Sigmoid colon (tissue), 7 donors: ENCODE measurements at regions of chr3 and their contacts with region 1.

Region 1: GRCh38 chr3:10224784-10225665 is 23.2 kb upstream of the TATDN2 start:
- DNase-seq: peak; percentile 82
- H3K4me3 ChIP-seq: no peak overlapping the region
- H3K27ac ChIP-seq: no peak overlapping the region
- H3K4me1 ChIP-seq: peaks cover 0 to 7% (median 6%) of the 10 kb centered on the region in 4 donors
- H3K27me3 ChIP-seq: no peaks in the 10 kb centered on the region
- CTCF ChIP-seq: peak; percentile 77 to 86 (median 84)
- EP300 ChIP-seq: no peak
- POLR2A ChIP-seq: no peak

Region 2: DNA sequence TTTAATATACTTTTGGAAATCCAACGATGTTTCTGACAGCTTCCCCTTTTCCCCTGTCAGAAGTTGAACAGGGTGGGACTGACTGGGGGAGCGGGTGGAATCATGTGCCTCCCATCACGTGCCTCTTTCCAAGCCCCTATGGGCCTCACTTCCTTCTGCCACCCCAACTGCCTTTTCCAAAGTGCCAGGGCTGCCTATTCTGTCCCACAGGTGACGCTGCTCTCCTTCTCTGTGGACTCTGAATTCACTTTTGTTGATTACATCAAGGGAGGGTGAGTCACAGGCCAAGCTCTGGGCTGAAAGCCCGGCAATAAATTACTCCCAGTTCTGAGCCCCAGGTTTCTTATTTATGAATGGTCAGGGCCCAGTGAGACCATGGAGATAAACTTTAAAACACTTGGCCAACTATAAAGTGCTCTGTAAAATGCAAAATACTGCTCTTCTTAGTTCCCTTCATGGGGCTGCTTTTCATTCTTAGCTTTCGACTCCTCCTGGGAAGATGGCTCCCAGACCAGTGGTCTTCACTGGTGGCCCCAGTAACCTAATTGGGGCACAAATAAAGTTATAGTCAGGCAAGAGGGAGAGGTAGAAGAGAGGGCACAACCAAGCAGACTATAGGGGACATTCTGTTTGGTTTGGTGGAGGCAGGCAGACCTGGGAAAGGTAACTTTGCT is 509.1 kb before region 1 on chr3:
- intact Hi-C with region 1: loop called (anchors 10 kb)
- DNase-seq: peak; percentile 94
- H3K4me3 ChIP-seq: no peak overlapping the region
- H3K27ac ChIP-seq: peak overlapping the region; percentile 68 to 80 (median 72)
- H3K4me1 ChIP-seq: peaks cover 0 to 19% (median 10%) of the 10 kb centered on the region in 4 donors
- H3K27me3 ChIP-seq: no peaks in the 10 kb centered on the region
- CTCF ChIP-seq: peak; percentile 74 to 81 (median 79)
- EP300 ChIP-seq: no peak
- POLR2A ChIP-seq: no peak

Region 3: GRCh38 chr3:10010486-10011465 is 214.2 kb before region 1 on chr3:
- intact Hi-C with region 1: loop called (anchors 10 kb)
- DNase-seq: peak; percentile 98
- H3K4me3 ChIP-seq: peak overlapping the region; percentile 53 to 67 (median 66)
- H3K27ac ChIP-seq: peak overlapping the region; percentile 80 to 84 (median 81)
- H3K4me1 ChIP-seq: peaks cover 0 to 44% (median 44%) of the 10 kb centered on the region in 4 donors
- H3K27me3 ChIP-seq: no peaks in the 10 kb centered on the region
- CTCF ChIP-seq: no peak
- EP300 ChIP-seq: no peak
- POLR2A ChIP-seq: peak; percentile 35 to 37

Region 4: GRCh38 chr3:10115326-10116137 is 109.5 kb before region 1 on chr3 and contains the start of gene BRK1:
- intact Hi-C with region 1: loop called (anchors 1 kb)
- DNase-seq: peak; percentile 97
- H3K4me3 ChIP-seq: peak within 1 kb of the TSS; percentile 50 to 93 (median 75)
- H3K27ac ChIP-seq: peak within 1 kb of the TSS; percentile 75 to 87 (median 82)
- H3K4me1 ChIP-seq: peaks cover 0 to 32% (median 26%) of the 10 kb centered on the region in 4 donors
- H3K27me3 ChIP-seq: no peaks in the 10 kb centered on the region
- CTCF ChIP-seq: no peak
- EP300 ChIP-seq: no peak
- POLR2A ChIP-seq: peak; percentile 81 to 86
- total RNA-seq, gene BRK1: 111 to 239 (median 152) TPM

Region 5: GRCh38 chr3:10164546-10165393 is 60.3 kb before region 1 on chr3 and contains the start of gene IRAK2:
- intact Hi-C with region 1: loop called (anchors 1 kb)
- DNase-seq: peak; percentile 90
- H3K4me3 ChIP-seq: peak within 1 kb of the TSS; percentile 72 to 93 (median 80)
- H3K27ac ChIP-seq: peak within 1 kb of the TSS; percentile 70 to 81 (median 76)
- H3K4me1 ChIP-seq: peaks cover 0 to 19% (median 6%) of the 10 kb centered on the region in 4 donors
- H3K27me3 ChIP-seq: no peaks in the 10 kb centered on the region
- CTCF ChIP-seq: peak; percentile 61 to 99 (median 76)
- EP300 ChIP-seq: no peak
- POLR2A ChIP-seq: no peak
- total RNA-seq, gene IRAK2: 1.1 to 6.1 (median 3.7) TPM